Endothelial cell of umbilical vein (primary cell): ENCODE measurements at regions of chr9 and their contacts with region 1.

Region 1: DNA sequence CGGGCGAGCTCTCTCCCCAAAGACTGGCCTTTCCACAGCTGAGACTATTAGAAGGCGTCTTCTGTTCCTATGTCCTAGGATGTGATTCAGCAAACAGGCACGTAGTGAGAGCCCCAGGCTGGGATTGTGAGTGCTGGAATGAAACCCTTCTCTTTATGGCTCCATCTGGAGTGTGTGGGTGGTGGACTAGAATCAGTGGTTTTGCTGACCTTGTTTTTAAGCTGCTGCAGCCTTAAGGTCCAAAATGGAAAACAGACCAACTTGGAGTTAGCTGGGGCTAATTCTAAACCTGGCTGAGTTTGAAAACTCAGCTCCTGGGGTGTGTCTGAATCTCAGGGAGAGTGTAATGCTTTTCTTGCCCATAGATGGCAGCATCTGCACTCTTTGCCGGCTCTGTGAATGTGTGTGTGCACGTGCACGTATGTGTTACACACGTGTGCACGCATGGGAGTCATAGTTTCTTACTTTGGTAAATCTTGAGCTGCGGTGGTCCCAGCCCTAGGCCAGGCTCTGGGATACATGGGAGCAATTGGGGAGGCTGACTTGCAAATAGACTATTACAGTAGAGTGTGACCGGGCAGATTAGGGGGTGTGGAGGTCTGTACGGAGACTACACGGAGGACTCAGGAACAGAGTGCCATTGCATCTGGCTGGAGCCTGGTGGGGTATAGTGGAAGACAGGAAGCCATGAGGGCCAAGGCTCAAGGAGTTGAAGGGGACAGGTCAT is 10.7 kb downstream of the GSN start:
- DNase-seq: peak; percentile 84
- H3K4me3 ChIP-seq: peak overlapping the region in 1 of 3 experiments; percentile 8
- H3K27ac ChIP-seq: peak overlapping the region; percentile 73
- H3K4me1 ChIP-seq: peaks cover 44% of the 10 kb centered on the region
- H3K27me3 ChIP-seq: no peaks in the 10 kb centered on the region
- CTCF ChIP-seq: peak; percentile 80 to 84
- POLR2A ChIP-seq: no peak

Region 2: DNA sequence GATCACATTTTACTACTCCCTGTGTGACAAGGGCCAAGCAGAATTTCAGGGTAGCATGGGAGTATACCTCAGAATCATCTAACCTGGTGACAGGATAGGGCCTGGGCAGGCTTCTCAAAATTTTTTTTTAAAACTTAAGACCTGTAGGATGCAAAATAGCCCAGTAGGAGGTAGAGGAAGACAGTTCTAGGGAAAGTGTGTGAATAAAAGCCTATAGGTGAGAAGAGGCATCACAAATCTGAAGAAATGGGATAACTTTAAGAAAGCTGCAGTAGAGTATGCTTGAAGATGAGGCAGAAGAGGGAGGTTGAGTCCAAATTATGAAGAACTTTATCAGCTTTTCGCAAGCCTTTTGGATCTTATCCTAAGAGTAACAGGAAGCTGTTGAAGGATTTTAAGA is 171.7 kb before region 1 on chr9:
- CTCF ChIA-PET with region 1: no interaction called
- POLR2A ChIA-PET with region 1: no interaction called
- dilution Hi-C with region 1: no loop called
- intact Hi-C with region 1: no loop called
- DNase-seq: no peak
- H3K4me3 ChIP-seq: no peak overlapping the region
- H3K27ac ChIP-seq: no peak overlapping the region
- H3K4me1 ChIP-seq: no peaks in the 10 kb centered on the region
- H3K27me3 ChIP-seq: no peaks in the 10 kb centered on the region
- CTCF ChIP-seq: no peak
- POLR2A ChIP-seq: no peak

Region 3: DNA sequence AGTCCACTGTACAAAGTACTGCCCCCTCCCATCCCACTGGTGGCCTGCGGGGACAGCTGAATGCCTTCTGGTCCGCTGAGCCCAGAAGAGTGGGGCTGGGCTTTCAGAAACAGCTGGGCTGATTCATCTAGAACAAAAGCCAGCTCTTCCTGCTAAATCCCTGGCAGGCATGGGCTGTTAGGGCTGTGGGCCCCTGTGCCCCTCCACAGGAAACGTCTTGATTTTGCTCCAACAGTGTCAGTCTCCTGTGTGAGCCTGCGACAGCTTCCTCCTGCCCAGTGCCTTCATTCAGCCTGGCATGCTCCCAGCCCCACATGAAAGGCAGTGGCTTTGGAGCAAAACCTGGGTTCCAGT is 17.6 kb before region 1 on chr9:
- CTCF ChIA-PET with region 1: interaction called, 30 read pairs
- POLR2A ChIA-PET with region 1: no interaction called
- dilution Hi-C with region 1: no loop called
- intact Hi-C with region 1: no loop called
- DNase-seq: peak; percentile 63
- H3K4me3 ChIP-seq: no peak overlapping the region
- H3K27ac ChIP-seq: peak overlapping the region; percentile 13
- H3K4me1 ChIP-seq: peaks cover 17% of the 10 kb centered on the region
- H3K27me3 ChIP-seq: peaks cover 0 to 5% of the 10 kb centered on the region in 2 experiments
- CTCF ChIP-seq: no peak
- POLR2A ChIP-seq: no peak

Region 4: DNA sequence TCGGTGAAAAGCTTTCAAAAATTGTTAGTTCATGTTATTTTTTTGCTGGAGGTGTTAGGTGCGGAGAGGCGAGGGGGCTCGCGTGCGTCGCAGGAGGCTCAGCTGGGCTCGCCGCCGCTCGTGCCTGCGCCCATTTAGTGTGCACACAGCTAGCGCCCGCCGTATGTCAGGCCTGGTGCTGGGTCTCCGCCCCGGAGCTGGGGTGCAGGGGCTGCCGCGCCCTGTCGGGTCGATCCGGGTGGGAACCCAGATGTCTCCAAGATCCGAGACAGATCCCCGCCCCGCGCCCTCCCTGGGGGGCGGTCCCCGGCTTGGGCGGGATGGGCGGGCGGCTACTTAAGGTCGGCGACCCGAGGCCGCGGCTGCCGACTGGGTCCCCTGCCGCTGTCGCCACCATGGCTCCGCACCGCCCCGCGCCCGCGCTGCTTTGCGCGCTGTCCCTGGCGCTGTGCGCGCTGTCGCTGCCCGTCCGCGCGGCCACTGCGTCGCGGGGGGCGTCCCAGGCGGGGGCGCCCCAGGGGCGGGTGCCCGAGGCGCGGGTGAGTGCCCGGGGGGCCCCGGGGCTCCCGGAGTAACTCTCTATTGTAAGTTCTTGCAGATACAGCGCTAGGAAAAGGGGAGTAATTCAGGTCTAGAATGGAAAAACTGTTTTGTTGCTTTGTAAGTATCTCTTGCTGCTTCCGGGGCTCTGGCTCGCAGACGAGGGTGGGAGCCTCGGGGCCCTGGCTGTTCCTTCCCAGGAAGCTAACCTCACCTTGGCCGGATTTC is 21.0 kb after region 1 on chr9:
- CTCF ChIA-PET with region 1: interaction called, 49 read pairs
- POLR2A ChIA-PET with region 1: no interaction called
- dilution Hi-C with region 1: no loop called
- intact Hi-C with region 1: no loop called
- DNase-seq: peak; percentile 41
- H3K4me3 ChIP-seq: peak overlapping the region; percentile 41 to 52 (median 44)
- H3K27ac ChIP-seq: no peak overlapping the region
- H3K4me1 ChIP-seq: peaks cover 15% of the 10 kb centered on the region
- H3K27me3 ChIP-seq: no peaks in the 10 kb centered on the region
- CTCF ChIP-seq: no peak
- POLR2A ChIP-seq: peak; percentile 31

Region 5: DNA sequence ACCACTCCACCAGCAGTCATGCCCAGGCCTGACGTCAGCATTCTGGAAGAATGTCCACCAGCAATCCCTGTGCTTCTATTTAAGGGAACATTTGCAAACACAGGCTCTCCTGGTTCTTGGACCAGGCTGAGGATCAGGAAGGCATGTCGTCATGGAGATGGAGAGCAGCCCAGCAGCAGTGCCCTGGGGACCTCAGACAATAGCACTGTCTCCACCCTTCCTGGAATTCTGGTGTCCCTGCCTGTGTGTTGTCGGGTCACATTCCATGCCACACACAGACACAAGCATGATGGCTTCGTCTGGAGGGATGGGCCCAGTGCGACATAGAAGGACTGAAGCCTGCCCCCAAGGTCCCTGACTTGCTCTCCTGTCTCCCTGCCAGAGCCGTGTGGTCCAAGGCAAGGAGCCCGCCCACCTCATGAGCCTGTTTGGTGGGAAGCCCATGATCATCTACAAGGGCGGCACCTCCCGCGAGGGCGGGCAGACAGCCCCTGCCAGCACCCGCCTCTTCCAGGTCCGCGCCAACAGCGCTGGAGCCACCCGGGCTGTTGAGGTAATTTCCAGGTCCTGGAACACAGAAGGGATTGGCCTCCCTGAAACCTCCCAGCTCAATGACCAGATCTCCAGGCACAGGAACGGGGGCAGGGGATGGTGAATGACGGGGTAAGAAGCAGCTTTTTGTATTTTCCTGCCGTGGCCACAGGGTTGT is 47.6 kb after region 1 on chr9:
- CTCF ChIA-PET with region 1: interaction called, 40 read pairs
- POLR2A ChIA-PET with region 1: no interaction called
- dilution Hi-C with region 1: no loop called
- intact Hi-C with region 1: no loop called
- DNase-seq: peak; percentile 83
- H3K4me3 ChIP-seq: no peak overlapping the region
- H3K27ac ChIP-seq: peak overlapping the region; percentile 50
- H3K4me1 ChIP-seq: peaks cover 28% of the 10 kb centered on the region
- H3K27me3 ChIP-seq: no peaks in the 10 kb centered on the region
- CTCF ChIP-seq: no peak
- POLR2A ChIP-seq: no peak

Region 6: DNA sequence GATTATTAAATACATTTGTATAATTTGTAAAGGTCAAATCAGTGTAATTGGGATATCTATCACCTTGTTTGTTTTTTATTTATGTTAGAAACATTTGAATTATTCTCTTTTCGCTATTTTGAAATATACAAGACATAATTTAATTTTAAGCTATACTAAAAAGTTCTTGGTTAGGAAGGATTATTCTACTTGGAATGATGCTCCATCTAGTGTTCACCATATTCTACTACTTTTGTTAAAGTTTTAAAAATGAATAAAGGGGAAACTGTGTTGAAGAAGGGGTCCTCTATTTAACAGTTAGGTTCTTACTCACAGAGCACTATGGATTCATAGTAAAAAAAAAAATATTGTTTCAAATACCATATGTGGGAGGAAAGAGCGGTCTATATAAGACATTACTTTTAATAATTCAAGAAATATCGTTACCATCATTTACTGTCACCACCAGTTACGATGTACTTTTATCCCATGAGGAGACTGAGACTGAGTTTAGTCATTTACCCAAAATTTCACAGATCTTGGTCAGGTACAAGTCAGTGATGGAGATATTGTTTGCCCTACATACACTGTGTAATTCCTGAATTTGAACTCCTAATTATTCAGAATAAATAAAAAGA is 97.6 kb after region 1 on chr9:
- CTCF ChIA-PET with region 1: interaction called, 23 read pairs
- POLR2A ChIA-PET with region 1: no interaction called
- dilution Hi-C with region 1: no loop called
- intact Hi-C with region 1: no loop called
- DNase-seq: peak; percentile 51
- H3K4me3 ChIP-seq: no peak overlapping the region
- H3K27ac ChIP-seq: no peak overlapping the region
- H3K4me1 ChIP-seq: no peaks in the 10 kb centered on the region
- H3K27me3 ChIP-seq: no peaks in the 10 kb centered on the region
- CTCF ChIP-seq: peak in 1 of 2 donors; percentile 17
- POLR2A ChIP-seq: no peak

Region 7: DNA sequence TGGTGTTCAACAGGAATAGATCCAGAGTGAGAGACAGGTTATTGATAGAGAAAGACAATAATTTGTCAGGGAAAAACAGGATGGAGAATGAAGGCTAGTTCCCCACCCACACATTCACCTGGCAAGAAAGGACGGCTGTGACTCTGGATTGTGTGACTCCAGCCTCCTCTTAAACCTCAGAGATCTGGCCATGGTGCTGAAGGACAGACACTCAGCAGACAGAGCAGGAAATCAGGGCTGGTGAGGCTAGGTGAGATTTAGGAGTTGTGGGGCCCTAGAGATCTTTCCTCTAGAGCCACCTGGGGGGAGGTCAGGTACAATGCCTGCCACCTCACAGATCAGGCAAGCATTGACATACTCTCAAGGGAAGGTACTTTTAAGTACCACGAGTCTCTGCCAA is 1363.5 kb after region 1 on chr9:
- CTCF ChIA-PET with region 1: no interaction called
- POLR2A ChIA-PET with region 1: no interaction called
- dilution Hi-C with region 1: no loop called
- intact Hi-C with region 1: no loop called
- DNase-seq: no peak
- H3K4me3 ChIP-seq: no peak overlapping the region
- H3K27ac ChIP-seq: no peak overlapping the region
- H3K4me1 ChIP-seq: no peaks in the 10 kb centered on the region
- H3K27me3 ChIP-seq: no peaks in the 10 kb centered on the region
- CTCF ChIP-seq: no peak
- POLR2A ChIP-seq: no peak